CD8-positive, alpha-beta T cell (primary cell): ENCODE measurements at regions of chr2 and their contacts with region 1.

Region 1: GRCh38 chr2:20350753-20351554 is at the start of gene PUM2:
- DNase-seq: peak; percentile 89 to 99 (median 96)
- ATAC-seq: peak; percentile 79
- H3K4me3 ChIP-seq: peak within 1 kb of the TSS; percentile 75 to 82
- H3K4me3 Mint-ChIP-seq: no peak within 1 kb of the TSS
- H3K27ac ChIP-seq: peak within 1 kb of the TSS; percentile 89 to 94
- H3K27ac Mint-ChIP-seq: peak within 1 kb of the TSS; percentile 82
- H3K4me1 ChIP-seq: peaks cover 47% of the 10 kb centered on the region
- H3K4me1 Mint-ChIP-seq: peaks cover 39% of the 10 kb centered on the region
- H3K27me3 ChIP-seq: no peaks in the 10 kb centered on the region
- H3K27me3 Mint-ChIP-seq: no peaks in the 10 kb centered on the region
- CTCF ChIP-seq: no peak
- total RNA-seq, gene PUM2: 91.3 to 93.5 TPM

Region 2: GRCh38 chr2:18560031-18560796 is 1790.7 kb before region 1 on chr2 and contains the start of gene RDH14:
- CTCF ChIA-PET with region 1: no interaction called
- POLR2A ChIA-PET with region 1: no interaction called
- intact Hi-C with region 1: loop called (anchors 1 kb)
- DNase-seq: peak; percentile 88 to 96 (median 94)
- ATAC-seq: peak; percentile 87
- H3K4me3 ChIP-seq: peak within 1 kb of the TSS; percentile 55 to 89
- H3K4me3 Mint-ChIP-seq: peak within 1 kb of the TSS; percentile 94
- H3K27ac ChIP-seq: peak within 1 kb of the TSS; percentile 81 to 92
- H3K27ac Mint-ChIP-seq: peak within 1 kb of the TSS; percentile 98
- H3K4me1 ChIP-seq: peaks cover 22% of the 10 kb centered on the region
- H3K4me1 Mint-ChIP-seq: peaks cover 42% of the 10 kb centered on the region
- H3K27me3 ChIP-seq: no peaks in the 10 kb centered on the region
- H3K27me3 Mint-ChIP-seq: no peaks in the 10 kb centered on the region
- CTCF ChIP-seq: no peak
- total RNA-seq, gene RDH14: 12.5 to 13.2 TPM

Region 3: DNA sequence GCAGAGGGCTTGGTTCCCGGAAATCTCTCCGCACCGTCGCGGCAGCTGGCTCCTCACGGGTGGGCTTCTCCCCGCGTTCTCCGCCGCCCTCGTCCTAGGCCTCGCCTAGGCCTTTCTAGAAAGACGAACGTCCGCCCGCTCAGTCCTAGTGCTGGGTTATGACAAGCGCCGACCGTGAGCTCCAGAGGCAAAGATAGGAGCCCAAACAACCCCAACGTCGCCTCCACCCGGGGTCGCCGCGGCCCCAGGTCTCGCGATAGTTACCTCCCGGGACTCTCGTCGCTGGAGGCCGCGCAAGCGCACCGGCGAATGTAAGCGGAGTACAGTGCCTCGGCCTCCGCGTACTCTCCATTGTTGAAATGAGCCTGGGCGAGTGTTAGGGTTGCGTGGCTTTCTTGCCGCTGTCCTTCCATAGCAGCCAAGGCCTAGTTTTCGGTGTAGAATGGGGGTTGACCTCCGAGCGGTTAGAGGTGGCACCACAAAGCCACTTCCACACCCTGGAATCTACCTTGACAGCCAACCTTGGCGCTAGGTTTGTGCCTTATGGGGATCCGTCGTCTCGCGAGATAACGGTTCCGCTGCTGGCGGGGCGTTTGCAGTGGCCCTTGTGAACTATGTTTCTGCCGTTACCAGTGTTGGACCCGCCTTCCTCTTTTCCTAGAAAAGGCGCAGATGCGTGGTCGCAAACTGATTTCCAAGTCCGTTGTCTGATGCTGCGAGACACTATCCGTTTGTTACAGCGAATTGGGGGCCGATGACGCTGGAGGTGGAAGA is 449.3 kb before region 1 on chr2 and contains the start of gene TTC32:
- CTCF ChIA-PET with region 1: no interaction called
- POLR2A ChIA-PET with region 1: no interaction called
- intact Hi-C with region 1: loop called (anchors 1 to 2 kb)
- DNase-seq: peak; percentile 87 to 96 (median 93)
- ATAC-seq: peak; percentile 86
- H3K4me3 ChIP-seq: peak within 1 kb of the TSS; percentile 83
- H3K4me3 Mint-ChIP-seq: peak within 1 kb of the TSS; percentile 91
- H3K27ac ChIP-seq: peak within 1 kb of the TSS; percentile 89 to 94
- H3K27ac Mint-ChIP-seq: peak within 1 kb of the TSS; percentile 96
- H3K4me1 ChIP-seq: peaks cover 33% of the 10 kb centered on the region
- H3K4me1 Mint-ChIP-seq: peaks cover 30% of the 10 kb centered on the region
- H3K27me3 ChIP-seq: peaks cover 0 to 3% of the 10 kb centered on the region in 2 experiments
- H3K27me3 Mint-ChIP-seq: peaks cover 4% of the 10 kb centered on the region
- CTCF ChIP-seq: no peak
- total RNA-seq, gene TTC32: 33.7 to 35.8 TPM

Region 4: GRCh38 chr2:20313659-20314058 is 37.3 kb before region 1 on chr2:
- CTCF ChIA-PET with region 1: interaction called, 3 read pairs
- POLR2A ChIA-PET with region 1: no interaction called
- intact Hi-C with region 1: loop called in 1 of 2 experiments (anchors 5 kb)
- DNase-seq: no peak
- ATAC-seq: no peak
- H3K4me3 ChIP-seq: no peak overlapping the region
- H3K4me3 Mint-ChIP-seq: no peak overlapping the region
- H3K27ac ChIP-seq: no peak overlapping the region
- H3K27ac Mint-ChIP-seq: peak overlapping the region; percentile 32
- H3K4me1 ChIP-seq: peaks cover 4% of the 10 kb centered on the region
- H3K4me1 Mint-ChIP-seq: peaks cover 42% of the 10 kb centered on the region
- H3K27me3 ChIP-seq: no peaks in the 10 kb centered on the region
- H3K27me3 Mint-ChIP-seq: no peaks in the 10 kb centered on the region
- CTCF ChIP-seq: no peak

Region 5: GRCh38 chr2:20411361-20411894 is 60.5 kb after region 1 on chr2:
- CTCF ChIA-PET with region 1: interaction called, 12 read pairs
- POLR2A ChIA-PET with region 1: no interaction called
- intact Hi-C with region 1: no loop called
- DNase-seq: peak; percentile 37 to 73 (median 64)
- ATAC-seq: peak; percentile 99
- H3K4me3 ChIP-seq: no peak overlapping the region
- H3K4me3 Mint-ChIP-seq: no peak overlapping the region
- H3K27ac ChIP-seq: no peak overlapping the region
- H3K27ac Mint-ChIP-seq: no peak overlapping the region
- H3K4me1 ChIP-seq: no peaks in the 10 kb centered on the region
- H3K4me1 Mint-ChIP-seq: no peaks in the 10 kb centered on the region
- H3K27me3 ChIP-seq: no peaks in the 10 kb centered on the region
- H3K27me3 Mint-ChIP-seq: peaks cover 11% of the 10 kb centered on the region
- CTCF ChIP-seq: peak; percentile 60

Region 6: DNA sequence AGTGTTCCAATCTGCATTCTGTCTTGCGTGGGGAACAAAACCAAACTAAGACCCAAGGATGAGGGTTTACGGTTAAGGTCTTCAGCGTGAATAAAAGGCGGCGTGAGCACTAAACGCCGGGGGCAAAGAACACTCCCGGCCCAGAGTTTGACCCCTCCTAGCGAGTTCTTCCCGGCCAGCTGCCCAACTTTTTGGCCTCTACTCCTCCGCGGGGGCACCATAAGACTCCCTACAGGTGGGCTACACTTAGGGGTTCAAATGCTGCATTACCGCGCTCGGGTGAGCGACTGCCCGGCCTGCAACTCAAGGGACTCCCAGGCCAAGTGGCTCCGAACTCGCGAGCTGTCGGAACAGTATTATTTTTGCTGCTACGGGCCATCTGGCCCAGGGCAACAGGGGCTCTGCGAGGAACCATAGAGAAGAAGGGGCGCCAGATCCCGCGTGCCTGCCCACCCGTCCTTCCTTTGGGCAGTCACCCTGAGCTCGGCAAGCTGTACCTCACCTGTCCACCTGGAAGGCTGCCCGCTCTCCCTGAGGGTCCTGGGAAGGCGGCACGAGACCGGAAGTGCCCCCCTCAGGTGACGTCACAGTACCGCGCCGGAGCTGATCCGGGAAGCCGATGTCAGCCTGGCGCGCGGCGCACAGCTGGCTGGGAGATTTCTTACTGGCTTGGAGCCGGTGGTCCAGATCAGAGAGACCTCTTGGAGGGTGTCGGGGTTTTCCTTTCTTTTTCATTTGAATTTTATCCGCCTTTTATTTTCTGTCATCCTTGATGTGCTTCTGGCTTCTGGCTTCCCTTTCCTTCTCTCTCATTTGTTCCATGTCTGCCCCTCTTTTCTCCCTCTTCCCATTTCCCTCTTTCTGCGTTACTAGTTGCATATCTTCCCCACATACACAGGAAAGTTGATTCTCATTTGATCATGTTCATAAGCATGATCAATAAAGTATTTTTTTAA is 471.9 kb after region 1 on chr2 and contains the start of gene LDAH:
- CTCF ChIA-PET with region 1: no interaction called
- POLR2A ChIA-PET with region 1: no interaction called
- intact Hi-C with region 1: loop called in 1 of 2 experiments (anchors 10 kb)
- DNase-seq: peak; percentile 67 to 92 (median 86)
- ATAC-seq: peak; percentile 84
- H3K4me3 ChIP-seq: peak within 1 kb of the TSS; percentile 79 to 86
- H3K4me3 Mint-ChIP-seq: peak within 1 kb of the TSS; percentile 97
- H3K27ac ChIP-seq: peak within 1 kb of the TSS; percentile 89 to 94
- H3K27ac Mint-ChIP-seq: peak within 1 kb of the TSS; percentile 99
- H3K4me1 ChIP-seq: no peaks in the 10 kb centered on the region
- H3K4me1 Mint-ChIP-seq: peaks cover 28% of the 10 kb centered on the region
- H3K27me3 ChIP-seq: no peaks in the 10 kb centered on the region
- H3K27me3 Mint-ChIP-seq: no peaks in the 10 kb centered on the region
- CTCF ChIP-seq: no peak
- total RNA-seq, gene LDAH: 3.0 to 4.6 TPM

Region 7: DNA sequence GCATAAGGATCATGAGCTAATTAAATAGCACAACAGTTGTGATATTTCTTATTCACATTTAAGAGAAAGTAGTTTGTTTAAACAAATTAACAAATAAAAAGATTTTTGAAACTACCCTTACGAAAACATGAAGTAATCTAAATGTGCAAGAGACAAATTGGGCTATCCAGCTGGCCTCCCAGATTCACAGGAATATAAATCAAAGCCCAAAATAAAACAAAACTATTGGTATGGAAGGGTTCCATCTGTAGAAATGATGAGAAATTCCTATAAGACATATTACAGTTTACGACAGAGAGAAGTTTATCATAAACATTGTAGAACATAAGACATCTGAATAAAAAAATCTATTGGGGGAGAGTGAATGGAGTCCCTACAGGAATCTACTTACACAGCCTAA is 1897.9 kb after region 1 on chr2:
- CTCF ChIA-PET with region 1: no interaction called
- POLR2A ChIA-PET with region 1: no interaction called
- intact Hi-C with region 1: no loop called
- DNase-seq: no peak
- ATAC-seq: no peak
- H3K4me3 ChIP-seq: no peak overlapping the region
- H3K4me3 Mint-ChIP-seq: no peak overlapping the region
- H3K27ac ChIP-seq: no peak overlapping the region
- H3K27ac Mint-ChIP-seq: no peak overlapping the region
- H3K4me1 ChIP-seq: no peaks in the 10 kb centered on the region
- H3K4me1 Mint-ChIP-seq: no peaks in the 10 kb centered on the region
- H3K27me3 ChIP-seq: no peaks in the 10 kb centered on the region
- H3K27me3 Mint-ChIP-seq: no peaks in the 10 kb centered on the region
- CTCF ChIP-seq: no peak